ENCODE measurements at regions of chr3 and their contacts with region 1.

Region 1: GRCh38 chr3:98817547-98818041 is 54.5 kb downstream of the ST3GAL6 start:
- DNase-seq: peak in 3 of 14 experiments; percentile 32 to 53 (median 52)
- ATAC-seq: peak; percentile 80
- H3K4me3 ChIP-seq: no peak overlapping the region
- H3K4me3 Mint-ChIP-seq: no peak overlapping the region
- H3K27ac ChIP-seq: no peak overlapping the region
- H3K27ac Mint-ChIP-seq: no peak overlapping the region
- H3K4me1 ChIP-seq: no peaks in the 10 kb centered on the region
- H3K4me1 Mint-ChIP-seq: no peaks in the 10 kb centered on the region
- H3K27me3 ChIP-seq: no peaks in the 10 kb centered on the region
- H3K27me3 Mint-ChIP-seq: no peaks in the 10 kb centered on the region
- CTCF ChIP-seq: peak; percentile 72

Region 2: GRCh38 chr3:98039322-98040024 is 778.1 kb before region 1 on chr3:
- CTCF ChIA-PET with region 1: interaction called, 3 read pairs
- POLR2A ChIA-PET with region 1: no interaction called
- intact Hi-C with region 1: loop called (anchors 2 to 5 kb)
- DNase-seq: peak; percentile 40 to 91 (median 62)
- ATAC-seq: peak; percentile 93
- H3K4me3 ChIP-seq: peak overlapping the region; percentile 45
- H3K4me3 Mint-ChIP-seq: peak overlapping the region; percentile 72
- H3K27ac ChIP-seq: peak overlapping the region; percentile 59 to 70
- H3K27ac Mint-ChIP-seq: peak overlapping the region; percentile 90
- H3K4me1 ChIP-seq: no peaks in the 10 kb centered on the region
- H3K4me1 Mint-ChIP-seq: no peaks in the 10 kb centered on the region
- H3K27me3 ChIP-seq: no peaks in the 10 kb centered on the region
- H3K27me3 Mint-ChIP-seq: peaks cover 15% of the 10 kb centered on the region
- CTCF ChIP-seq: peak; percentile 98

Region 3: GRCh38 chr3:98602078-98602678 is 215.4 kb before region 1 on chr3:
- CTCF ChIA-PET with region 1: interaction called, 3 read pairs
- POLR2A ChIA-PET with region 1: no interaction called
- intact Hi-C with region 1: loop called (anchors 1 to 5 kb)
- DNase-seq: peak in 4 of 14 experiments; percentile 13 to 56 (median 42)
- ATAC-seq: peak; percentile 79
- H3K4me3 ChIP-seq: no peak overlapping the region
- H3K4me3 Mint-ChIP-seq: no peak overlapping the region
- H3K27ac ChIP-seq: no peak overlapping the region
- H3K27ac Mint-ChIP-seq: no peak overlapping the region
- H3K4me1 ChIP-seq: no peaks in the 10 kb centered on the region
- H3K4me1 Mint-ChIP-seq: no peaks in the 10 kb centered on the region
- H3K27me3 ChIP-seq: no peaks in the 10 kb centered on the region
- H3K27me3 Mint-ChIP-seq: peaks cover 13% of the 10 kb centered on the region
- CTCF ChIP-seq: peak; percentile 74

Region 4: DNA sequence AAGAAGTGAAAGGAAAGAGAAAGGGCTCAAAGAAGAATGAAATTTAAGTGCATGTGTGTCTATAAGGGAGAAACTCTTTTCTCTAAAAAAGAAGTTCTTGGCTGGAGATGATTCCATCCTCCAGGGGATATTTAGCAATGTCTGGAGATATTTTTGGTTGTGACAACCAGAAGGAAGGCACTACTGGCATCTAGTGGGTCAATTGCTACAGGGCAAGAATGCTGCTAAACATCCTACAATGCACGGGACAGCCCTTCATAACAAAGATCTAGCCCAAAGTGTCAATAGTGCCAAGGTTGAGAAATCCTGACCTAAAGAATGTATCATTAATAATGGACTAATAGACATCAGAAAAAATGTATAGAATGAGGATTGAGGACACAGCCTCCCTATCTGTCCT is 111.9 kb before region 1 on chr3:
- CTCF ChIA-PET with region 1: no interaction called
- POLR2A ChIA-PET with region 1: no interaction called
- intact Hi-C with region 1: no loop called
- DNase-seq: no peak
- ATAC-seq: no peak
- H3K4me3 ChIP-seq: no peak overlapping the region
- H3K4me3 Mint-ChIP-seq: no peak overlapping the region
- H3K27ac ChIP-seq: no peak overlapping the region
- H3K27ac Mint-ChIP-seq: no peak overlapping the region
- H3K4me1 ChIP-seq: no peaks in the 10 kb centered on the region
- H3K4me1 Mint-ChIP-seq: no peaks in the 10 kb centered on the region
- H3K27me3 ChIP-seq: no peaks in the 10 kb centered on the region
- H3K27me3 Mint-ChIP-seq: peaks cover 5% of the 10 kb centered on the region
- CTCF ChIP-seq: no peak

Region 5: DNA sequence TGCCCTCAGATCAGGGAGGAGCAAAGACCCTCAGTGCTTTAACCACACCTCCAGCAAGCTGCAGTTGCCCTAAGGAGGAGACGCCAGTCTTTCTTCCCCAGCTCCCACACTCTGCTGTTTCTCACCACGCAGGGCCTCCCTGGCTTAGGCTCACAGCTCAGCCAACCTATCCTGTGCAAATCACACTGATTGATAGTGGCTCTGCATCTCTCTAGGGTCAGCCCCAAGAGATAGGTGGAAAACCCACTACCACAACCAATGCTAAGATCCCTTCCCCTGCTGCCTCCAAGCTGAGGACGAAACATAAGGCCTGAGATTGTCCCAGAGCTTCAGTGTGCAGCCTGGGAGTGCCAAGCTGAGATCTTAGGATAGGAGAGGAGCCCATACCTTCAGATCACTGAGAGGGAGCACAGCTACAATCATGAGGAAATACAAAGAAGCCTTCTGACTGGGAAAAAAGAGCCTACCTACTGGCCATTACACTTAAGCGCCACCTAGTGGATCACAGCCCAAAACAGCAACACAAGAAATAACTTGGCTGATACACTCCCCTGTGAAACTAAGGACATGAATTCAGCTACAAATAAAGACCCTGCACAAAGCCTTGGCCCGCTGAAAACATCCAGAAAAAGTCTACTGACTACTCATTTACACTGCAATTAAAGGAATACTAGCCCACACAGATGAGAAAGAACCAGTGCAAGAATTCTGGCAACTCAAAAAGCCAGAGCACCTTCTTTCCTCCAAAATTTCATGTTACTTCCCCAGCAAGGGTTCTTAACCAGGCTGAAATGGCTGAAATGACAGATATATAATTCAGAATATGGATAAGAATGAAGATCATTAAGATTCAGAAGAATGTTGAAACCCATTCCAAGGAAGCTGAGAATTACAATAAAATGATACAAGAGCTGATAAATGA is 355.4 kb after region 1 on chr3:
- CTCF ChIA-PET with region 1: no interaction called
- POLR2A ChIA-PET with region 1: no interaction called
- intact Hi-C with region 1: loop called (anchors 1 to 5 kb)
- DNase-seq: peak in 4 of 14 experiments; percentile 14 to 34 (median 22)
- ATAC-seq: no peak
- H3K4me3 ChIP-seq: no peak overlapping the region
- H3K4me3 Mint-ChIP-seq: no peak overlapping the region
- H3K27ac ChIP-seq: no peak overlapping the region
- H3K27ac Mint-ChIP-seq: no peak overlapping the region
- H3K4me1 ChIP-seq: no peaks in the 10 kb centered on the region
- H3K4me1 Mint-ChIP-seq: no peaks in the 10 kb centered on the region
- H3K27me3 ChIP-seq: no peaks in the 10 kb centered on the region
- H3K27me3 Mint-ChIP-seq: no peaks in the 10 kb centered on the region
- CTCF ChIP-seq: peak; percentile 21

Region 6: GRCh38 chr3:99753268-99753975 is 935.8 kb after region 1 on chr3:
- CTCF ChIA-PET with region 1: interaction called, 9 read pairs
- POLR2A ChIA-PET with region 1: no interaction called
- intact Hi-C with region 1: loop called (anchors 1 to 2 kb)
- DNase-seq: peak in 3 of 14 experiments; percentile 28 to 51 (median 46)
- ATAC-seq: peak; percentile 62
- H3K4me3 ChIP-seq: no peak overlapping the region
- H3K4me3 Mint-ChIP-seq: no peak overlapping the region
- H3K27ac ChIP-seq: no peak overlapping the region
- H3K27ac Mint-ChIP-seq: no peak overlapping the region
- H3K4me1 ChIP-seq: no peaks in the 10 kb centered on the region
- H3K4me1 Mint-ChIP-seq: no peaks in the 10 kb centered on the region
- H3K27me3 ChIP-seq: peaks cover 0 to 5% of the 10 kb centered on the region in 2 experiments
- H3K27me3 Mint-ChIP-seq: peaks cover 22% of the 10 kb centered on the region
- CTCF ChIP-seq: peak; percentile 47

Region 7: GRCh38 chr3:99808151-99808794 is 990.7 kb after region 1 on chr3:
- CTCF ChIA-PET with region 1: no interaction called
- POLR2A ChIA-PET with region 1: no interaction called
- intact Hi-C with region 1: loop called (anchors 1 to 5 kb)
- DNase-seq: peak in 8 of 14 experiments; percentile 6 to 74 (median 33)
- ATAC-seq: peak; percentile 61
- H3K4me3 ChIP-seq: no peak overlapping the region
- H3K4me3 Mint-ChIP-seq: no peak overlapping the region
- H3K27ac ChIP-seq: no peak overlapping the region
- H3K27ac Mint-ChIP-seq: no peak overlapping the region
- H3K4me1 ChIP-seq: no peaks in the 10 kb centered on the region
- H3K4me1 Mint-ChIP-seq: no peaks in the 10 kb centered on the region
- H3K27me3 ChIP-seq: no peaks in the 10 kb centered on the region
- H3K27me3 Mint-ChIP-seq: no peaks in the 10 kb centered on the region
- CTCF ChIP-seq: peak; percentile 75

Measured in CD4-positive, alpha-beta T cell (primary cell).